ENCODE measurements at regions of chr5 and their contacts with region 1.

Region 1: GRCh38 chr5:153974131-153974812 is 64.4 kb downstream of the FAM114A2 start:
- DNase-seq: peak; percentile 66
- CTCF ChIP-seq: peak; percentile 79

Region 2: DNA sequence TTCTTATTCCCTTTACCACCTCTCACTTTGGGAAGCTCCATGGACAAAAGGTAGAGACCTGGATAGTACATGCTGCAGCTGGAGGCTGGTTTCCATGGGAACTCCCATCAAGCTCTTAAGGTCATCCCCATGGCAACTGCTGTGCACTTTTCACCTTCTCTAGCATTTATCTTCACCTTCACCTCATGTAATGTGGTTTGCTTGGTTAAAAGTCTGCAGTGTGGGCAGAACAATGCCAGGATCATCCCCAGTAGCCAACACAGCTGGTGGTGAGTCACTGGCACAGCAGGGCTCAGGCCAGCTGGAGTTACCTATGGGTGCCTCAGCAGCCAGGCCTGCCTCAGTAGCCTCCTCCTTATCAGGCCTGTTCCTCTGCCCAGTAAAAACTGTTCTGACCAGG is 273.3 kb before region 1 on chr5:
- CTCF ChIA-PET with region 1: no interaction called
- POLR2A ChIA-PET with region 1: no interaction called
- DNase-seq: no peak
- CTCF ChIP-seq: no peak

Region 3: DNA sequence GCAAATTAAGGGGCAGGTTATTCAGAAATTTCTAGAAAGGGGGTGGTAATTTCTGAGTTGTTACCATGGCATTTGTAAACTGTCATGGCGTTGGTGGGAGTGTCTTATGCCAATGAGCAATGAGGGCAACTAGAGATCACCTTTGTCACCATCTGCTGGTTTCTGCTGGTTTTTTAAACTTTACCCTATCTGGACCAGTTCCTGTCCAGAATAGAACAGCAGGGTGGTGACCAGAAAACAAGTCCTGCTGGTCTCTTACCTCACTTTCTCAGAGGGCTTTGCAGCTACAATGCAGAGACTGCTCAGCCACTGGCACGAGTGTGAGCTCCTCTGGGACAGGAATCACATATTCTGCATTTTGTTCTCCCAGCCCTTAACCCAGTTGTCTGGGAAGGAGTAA is 13.0 kb after region 1 on chr5:
- CTCF ChIA-PET with region 1: interaction called, 36 read pairs
- POLR2A ChIA-PET with region 1: no interaction called
- DNase-seq: no peak
- CTCF ChIP-seq: no peak

Region 4: DNA sequence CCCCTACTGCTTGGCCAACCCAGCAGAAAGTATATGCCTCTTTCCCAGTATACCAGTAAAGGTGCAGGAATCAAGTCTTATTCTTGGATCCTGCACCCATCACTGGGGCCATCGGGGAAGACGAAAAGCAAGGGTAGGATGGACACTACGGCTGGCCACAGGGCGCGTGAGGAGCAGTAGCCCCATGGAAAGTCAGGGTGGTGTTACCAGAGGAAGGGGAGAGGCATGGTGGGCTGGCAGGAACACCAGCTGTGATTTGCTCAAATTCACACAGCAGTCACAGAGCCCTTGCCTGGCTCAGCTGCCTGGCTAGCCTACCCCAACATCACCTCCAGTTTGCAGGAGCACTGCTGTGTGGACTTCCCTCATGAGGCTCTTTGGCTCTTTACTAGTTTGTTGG is 437.1 kb after region 1 on chr5:
- CTCF ChIA-PET with region 1: no interaction called
- POLR2A ChIA-PET with region 1: no interaction called
- DNase-seq: no peak
- CTCF ChIP-seq: no peak